ENCODE measurements at regions of chr2 and their contacts with region 1.

Region 1: GRCh38 chr2:63588385-63589147 is at the starts of genes MDH1 and WDPCP:
- H3K4me3 ChIP-seq: peak within 1 kb of the TSS; percentile 100
- H3K27ac ChIP-seq: peak within 1 kb of the TSS; percentile 74
- H3K4me1 ChIP-seq: peaks cover 19% of the 10 kb centered on the region
- CTCF ChIP-seq: no peak

Region 2: DNA sequence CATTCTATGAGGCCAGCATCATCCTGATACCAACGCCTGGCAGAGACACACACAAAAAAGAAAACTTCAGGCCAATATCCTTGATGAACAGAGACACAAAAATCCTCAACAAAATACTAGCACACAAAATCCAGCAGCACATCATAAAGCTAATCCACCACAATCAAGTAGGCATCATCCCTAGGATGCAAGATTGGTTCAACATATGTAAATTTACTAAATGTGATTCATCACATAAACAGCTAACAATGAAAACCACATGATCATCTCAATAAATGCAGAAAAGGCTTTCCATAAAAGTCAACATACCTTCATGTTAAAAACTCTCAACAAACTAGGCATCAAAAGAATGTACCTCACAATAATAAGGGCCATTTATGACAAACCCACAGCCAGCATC is 65.6 kb before region 1 on chr2:
- CTCF ChIA-PET with region 1: no interaction called
- POLR2A ChIA-PET with region 1: no interaction called
- H3K4me3 ChIP-seq: no peak overlapping the region
- H3K27ac ChIP-seq: no peak overlapping the region
- H3K4me1 ChIP-seq: no peaks in the 10 kb centered on the region
- CTCF ChIP-seq: no peak

Region 3: GRCh38 chr2:63614983-63615945 is 26.7 kb after region 1 on chr2:
- CTCF ChIA-PET with region 1: no interaction called
- POLR2A ChIA-PET with region 1: interaction called, 10 read pairs
- H3K4me3 ChIP-seq: no peak overlapping the region
- H3K27ac ChIP-seq: no peak overlapping the region
- H3K4me1 ChIP-seq: no peaks in the 10 kb centered on the region
- CTCF ChIP-seq: no peak

Measured in HEK293 (cell line).